ENCODE measurements at regions of chr7 and their contacts with region 1.

Region 1: GRCh38 chr7:36440880-36441279 is 51.2 kb downstream of the ANLN start:
- DNase-seq: peak; percentile 37 to 41
- ATAC-seq: peak; percentile 76 to 81; a peak in 4 of 6 replicates
- H3K4me3 ChIP-seq: no peak overlapping the region
- H3K27ac ChIP-seq: no peak overlapping the region
- H3K4me1 ChIP-seq: no peaks in the 10 kb centered on the region
- CTCF ChIP-seq: peak; percentile 74
- EP300 ChIP-seq: no peak
- POLR2A ChIP-seq: no peak
- RAD21 ChIP-seq: peak; percentile 42 to 65; a peak in 4 of 5 replicates

Region 2: DNA sequence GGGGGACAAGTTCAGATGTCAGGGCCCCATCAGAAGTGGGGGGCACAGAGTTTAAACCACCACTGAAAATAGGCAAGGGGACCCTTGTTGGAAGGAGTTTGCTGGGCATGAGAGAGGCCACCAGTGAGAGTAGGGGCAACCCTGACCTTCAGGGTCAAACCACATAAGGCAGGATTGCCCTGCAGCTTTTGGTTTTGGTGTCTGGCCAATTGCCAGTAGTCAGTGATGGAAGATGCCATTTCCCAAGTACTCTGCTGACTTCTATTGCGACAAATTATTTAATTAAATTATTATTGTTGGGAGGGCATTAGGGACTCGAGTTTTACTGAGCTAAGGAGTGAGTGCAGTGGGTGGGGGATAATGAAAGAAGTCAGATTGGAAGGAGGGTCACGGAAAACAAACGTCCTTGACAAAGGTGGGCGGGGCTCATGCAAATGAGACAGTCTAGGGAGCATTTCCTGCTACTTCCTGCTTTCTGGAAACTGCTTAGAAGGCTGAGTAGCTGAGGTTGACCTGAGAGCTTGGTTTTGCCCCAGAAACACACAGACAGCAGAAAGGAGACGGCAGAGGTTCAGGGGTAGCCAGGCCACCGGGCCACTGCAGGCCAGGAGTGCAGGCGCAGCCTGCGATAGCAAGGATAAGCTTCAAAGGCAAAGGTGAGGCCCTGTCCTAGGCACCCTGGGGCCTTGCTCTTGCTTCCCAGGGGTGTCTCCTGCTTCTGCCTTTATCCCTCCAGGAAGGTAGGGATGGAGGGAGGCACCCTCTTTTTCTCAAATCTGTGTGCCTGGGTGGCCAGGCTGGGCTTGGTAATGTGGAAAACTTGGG is 125.4 kb before region 1 on chr7:
- CTCF ChIA-PET with region 1: no interaction called
- POLR2A ChIA-PET with region 1: no interaction called
- DNase-seq: peak in 1 of 2 experiments; percentile 14
- ATAC-seq: no peak
- H3K4me3 ChIP-seq: no peak overlapping the region
- H3K27ac ChIP-seq: no peak overlapping the region
- H3K4me1 ChIP-seq: no peaks in the 10 kb centered on the region
- CTCF ChIP-seq: no peak
- EP300 ChIP-seq: no peak
- POLR2A ChIP-seq: no peak
- RAD21 ChIP-seq: no peak

Region 3: DNA sequence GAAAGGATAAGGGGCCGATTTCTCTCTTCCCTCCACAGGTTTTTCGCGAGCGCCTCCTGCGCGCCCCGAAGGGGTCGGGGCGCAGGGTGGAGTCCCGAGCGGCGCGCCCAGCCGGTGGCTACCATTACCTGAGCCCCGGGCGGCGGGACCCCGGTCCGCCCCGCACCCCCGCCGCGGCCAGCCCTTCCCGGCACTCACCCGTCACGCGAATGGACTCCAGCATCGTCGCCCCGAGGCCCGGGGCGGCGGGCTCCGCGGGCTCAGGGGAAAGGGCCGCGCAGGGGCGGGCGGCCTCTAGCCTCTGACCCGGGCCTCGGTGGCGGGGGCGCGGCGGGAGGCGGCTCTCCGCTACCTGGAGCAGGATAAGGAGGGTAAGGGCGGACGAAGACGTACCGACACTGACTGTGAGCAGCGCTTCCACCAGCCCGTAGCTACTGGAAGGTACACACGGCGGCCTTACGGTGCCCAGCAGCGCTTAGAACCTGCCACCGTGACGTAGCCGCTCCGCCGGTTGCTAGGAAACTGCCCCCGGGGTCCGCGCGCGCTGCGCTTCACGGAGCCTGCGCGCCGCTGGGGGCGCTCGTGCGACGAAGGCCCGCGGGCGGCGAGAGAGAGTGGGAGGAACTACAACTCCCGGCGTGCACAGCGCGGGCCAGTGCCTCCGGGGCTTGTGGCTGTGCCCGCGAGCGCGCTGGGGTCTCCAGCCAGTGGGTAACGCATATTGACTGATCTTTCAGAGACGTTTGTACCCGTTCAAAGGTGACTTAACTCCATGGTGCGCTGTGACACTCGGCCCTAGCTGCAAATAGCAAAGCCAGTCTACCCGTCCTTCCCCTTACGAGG is 73.9 kb before region 1 on chr7:
- CTCF ChIA-PET with region 1: interaction called, 10 read pairs
- POLR2A ChIA-PET with region 1: no interaction called
- DNase-seq: peak; percentile 90 to 91
- ATAC-seq: peak; percentile 97 to 99
- H3K4me3 ChIP-seq: peak overlapping the region; percentile 92
- H3K27ac ChIP-seq: peak overlapping the region; percentile 88 to 94
- H3K4me1 ChIP-seq: peaks cover 8% of the 10 kb centered on the region; the same call in 2 of the 3 replicates
- CTCF ChIP-seq: peak; percentile 81
- EP300 ChIP-seq: no peak
- POLR2A ChIP-seq: peak; percentile 43
- RAD21 ChIP-seq: peak; percentile 52 to 62

Region 4: DNA sequence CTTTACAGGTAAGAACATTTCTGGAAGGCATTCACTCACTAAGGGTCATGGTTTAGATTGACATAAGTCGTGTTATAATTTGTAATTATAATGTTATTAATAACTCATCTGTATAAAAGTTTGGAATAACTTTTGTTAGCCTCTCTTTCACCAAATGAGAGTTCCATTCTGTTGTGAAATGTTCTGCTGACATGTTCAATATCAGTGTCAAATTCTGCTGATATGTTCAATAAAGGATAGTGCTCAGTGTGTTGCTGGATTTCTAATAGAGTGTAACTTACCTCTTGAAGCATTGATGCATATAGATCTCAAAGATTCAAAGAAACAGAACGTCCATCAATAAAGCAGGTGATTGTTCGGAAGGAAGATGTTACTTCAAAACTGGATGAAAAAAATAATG is 20.6 kb before region 1 on chr7:
- CTCF ChIA-PET with region 1: interaction called, 16 read pairs
- POLR2A ChIA-PET with region 1: no interaction called
- DNase-seq: no peak
- ATAC-seq: no peak
- H3K4me3 ChIP-seq: no peak overlapping the region
- H3K27ac ChIP-seq: no peak overlapping the region
- H3K4me1 ChIP-seq: no peaks in the 10 kb centered on the region
- CTCF ChIP-seq: no peak
- EP300 ChIP-seq: no peak
- POLR2A ChIP-seq: no peak
- RAD21 ChIP-seq: no peak

Region 5: GRCh38 chr7:36430186-36430585 is 10.7 kb before region 1 on chr7:
- CTCF ChIA-PET with region 1: interaction called, 20 read pairs
- POLR2A ChIA-PET with region 1: no interaction called
- DNase-seq: no peak
- ATAC-seq: no peak
- H3K4me3 ChIP-seq: no peak overlapping the region
- H3K27ac ChIP-seq: no peak overlapping the region
- H3K4me1 ChIP-seq: no peaks in the 10 kb centered on the region
- CTCF ChIP-seq: no peak
- EP300 ChIP-seq: no peak
- POLR2A ChIP-seq: no peak
- RAD21 ChIP-seq: no peak

Region 6: DNA sequence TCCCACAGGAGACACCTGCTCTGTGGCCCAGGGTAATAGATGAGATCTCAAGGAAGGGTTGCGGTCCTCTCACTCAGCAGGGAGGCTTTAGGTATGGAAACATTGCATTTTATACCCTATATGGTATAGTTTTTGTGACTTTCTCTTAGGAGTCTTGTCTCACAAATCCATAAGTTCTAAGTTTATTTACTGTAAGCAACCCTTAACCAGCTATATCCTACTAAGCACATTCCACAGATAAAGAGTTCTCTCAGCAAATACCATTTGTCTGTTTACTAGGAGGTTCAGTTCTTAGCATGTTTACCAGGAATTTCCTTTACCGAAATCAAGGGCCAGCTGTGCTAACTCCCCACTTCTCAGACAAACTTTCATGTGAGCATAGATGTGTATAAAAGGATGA is 15.7 kb after region 1 on chr7:
- CTCF ChIA-PET with region 1: interaction called, 34 read pairs
- POLR2A ChIA-PET with region 1: no interaction called
- DNase-seq: no peak
- ATAC-seq: peak in 1 of 2 experiments; percentile 23; a peak in 2 of 6 replicates
- H3K4me3 ChIP-seq: no peak overlapping the region
- H3K27ac ChIP-seq: no peak overlapping the region
- H3K4me1 ChIP-seq: no peaks in the 10 kb centered on the region
- CTCF ChIP-seq: no peak
- EP300 ChIP-seq: no peak
- POLR2A ChIP-seq: no peak
- RAD21 ChIP-seq: no peak